PC-9 (cell line): ENCODE measurements at regions of chr9 and their contacts with region 1.

Region 1: GRCh38 chr9:70398145-70398556 is 16.3 kb downstream of the KLF9 start:
- DNase-seq: no peak
- H3K4me3 ChIP-seq: no peak overlapping the region
- H3K27ac ChIP-seq: no peak overlapping the region
- H3K4me1 ChIP-seq: no peaks in the 10 kb centered on the region
- H3K27me3 ChIP-seq: no peaks in the 10 kb centered on the region
- CTCF ChIP-seq: no peak

Region 2: DNA sequence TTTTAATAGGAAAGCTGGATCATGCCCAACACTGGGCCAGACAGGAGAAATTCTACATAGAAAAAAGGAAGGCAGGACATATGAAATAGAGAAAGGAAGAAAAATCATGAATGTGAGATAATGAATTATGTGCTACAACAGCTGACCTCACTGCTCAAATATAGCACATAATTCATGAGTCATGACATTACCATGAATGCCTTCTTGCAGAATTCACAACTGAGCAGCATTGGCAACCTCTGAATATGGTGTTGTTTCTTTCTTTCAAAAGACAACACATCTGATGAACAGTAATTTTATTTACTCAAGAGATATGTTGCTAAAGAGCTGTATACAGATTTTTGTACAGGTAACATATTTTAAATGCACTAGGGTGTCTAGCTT is 760.3 kb before region 1 on chr9:
- CTCF ChIA-PET with region 1: interaction called, 11 read pairs
- POLR2A ChIA-PET with region 1: no interaction called
- intact Hi-C with region 1: no loop called
- DNase-seq: peak in 1 of 2 experiments; percentile 40
- H3K4me3 ChIP-seq: no peak overlapping the region
- H3K27ac ChIP-seq: no peak overlapping the region
- H3K4me1 ChIP-seq: no peaks in the 10 kb centered on the region
- H3K27me3 ChIP-seq: no peaks in the 10 kb centered on the region
- CTCF ChIP-seq: no peak

Region 3: DNA sequence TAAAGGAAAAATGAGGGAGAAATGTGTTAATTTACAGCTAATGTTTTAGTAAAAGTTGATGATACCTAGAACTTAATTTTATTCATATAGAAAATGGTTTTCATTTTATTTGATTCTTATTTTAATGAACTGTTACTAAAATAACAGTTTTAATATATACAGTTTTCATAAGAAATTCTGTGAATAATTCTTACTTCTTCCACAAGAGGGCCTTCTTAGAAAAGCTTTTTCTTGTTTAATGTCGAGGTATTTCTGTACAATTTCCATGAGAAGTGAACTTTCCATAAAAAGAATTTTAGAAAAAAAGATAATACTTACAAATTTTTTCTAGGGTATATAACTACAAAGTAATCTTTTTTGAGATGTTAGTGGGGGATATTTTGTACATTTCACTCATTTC is 57.6 kb before region 1 on chr9:
- CTCF ChIA-PET with region 1: no interaction called
- POLR2A ChIA-PET with region 1: no interaction called
- intact Hi-C with region 1: no loop called
- DNase-seq: no peak
- H3K4me3 ChIP-seq: no peak overlapping the region
- H3K27ac ChIP-seq: no peak overlapping the region
- H3K4me1 ChIP-seq: no peaks in the 10 kb centered on the region
- H3K27me3 ChIP-seq: no peaks in the 10 kb centered on the region
- CTCF ChIP-seq: peak; percentile 78